Activated CD4-positive, alpha-beta T cell treated with anti-CD3 and anti-CD28 coated beads for 36 hours (primary cell): ENCODE measurements at regions of chr11 and their contacts with region 1.

Region 1: GRCh38 chr11:250740-251299 is 14.0 kb downstream of the PSMD13 start:
- DNase-seq: peak; percentile 90
- ATAC-seq: peak; percentile 97
- H3K4me3 Mint-ChIP-seq: no peak overlapping the region
- H3K27ac Mint-ChIP-seq: peak overlapping the region; percentile 56
- H3K4me1 Mint-ChIP-seq: peaks cover 13% of the 10 kb centered on the region
- H3K27me3 Mint-ChIP-seq: no peaks in the 10 kb centered on the region

Region 2: DNA sequence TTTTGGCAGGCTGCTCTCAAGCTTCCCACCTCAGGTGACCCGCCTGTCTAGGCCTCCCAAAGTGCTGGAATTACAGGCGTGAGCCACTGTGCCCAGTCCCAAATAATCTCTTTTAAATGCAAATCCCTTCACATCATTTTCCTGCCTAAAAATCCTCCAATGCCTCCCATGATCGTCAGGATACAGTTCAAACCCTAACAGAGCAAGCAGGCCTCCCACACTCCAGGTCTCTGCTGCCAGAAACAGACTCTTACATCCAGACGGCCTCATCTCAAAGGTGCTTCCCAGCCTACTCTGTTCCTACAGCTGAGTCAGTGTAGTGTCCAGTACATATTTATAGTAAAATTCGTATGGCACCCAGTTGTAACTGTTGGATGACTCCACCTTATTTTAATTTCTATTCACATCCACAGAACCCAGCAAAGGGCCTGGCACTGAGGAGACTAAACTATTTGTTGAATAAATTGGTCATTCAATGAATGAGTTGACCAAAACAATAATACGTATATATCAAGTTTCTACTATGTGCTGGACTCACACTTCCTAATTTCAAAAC is 22.9 kb before region 1 on chr11:
- CTCF ChIA-PET with region 1: interaction called, 12 read pairs
- POLR2A ChIA-PET with region 1: no interaction called
- intact Hi-C with region 1: no loop called
- DNase-seq: no peak
- ATAC-seq: no peak
- H3K4me3 Mint-ChIP-seq: no peak overlapping the region
- H3K27ac Mint-ChIP-seq: no peak overlapping the region
- H3K4me1 Mint-ChIP-seq: peaks cover 10% of the 10 kb centered on the region
- H3K27me3 Mint-ChIP-seq: no peaks in the 10 kb centered on the region

Region 3: DNA sequence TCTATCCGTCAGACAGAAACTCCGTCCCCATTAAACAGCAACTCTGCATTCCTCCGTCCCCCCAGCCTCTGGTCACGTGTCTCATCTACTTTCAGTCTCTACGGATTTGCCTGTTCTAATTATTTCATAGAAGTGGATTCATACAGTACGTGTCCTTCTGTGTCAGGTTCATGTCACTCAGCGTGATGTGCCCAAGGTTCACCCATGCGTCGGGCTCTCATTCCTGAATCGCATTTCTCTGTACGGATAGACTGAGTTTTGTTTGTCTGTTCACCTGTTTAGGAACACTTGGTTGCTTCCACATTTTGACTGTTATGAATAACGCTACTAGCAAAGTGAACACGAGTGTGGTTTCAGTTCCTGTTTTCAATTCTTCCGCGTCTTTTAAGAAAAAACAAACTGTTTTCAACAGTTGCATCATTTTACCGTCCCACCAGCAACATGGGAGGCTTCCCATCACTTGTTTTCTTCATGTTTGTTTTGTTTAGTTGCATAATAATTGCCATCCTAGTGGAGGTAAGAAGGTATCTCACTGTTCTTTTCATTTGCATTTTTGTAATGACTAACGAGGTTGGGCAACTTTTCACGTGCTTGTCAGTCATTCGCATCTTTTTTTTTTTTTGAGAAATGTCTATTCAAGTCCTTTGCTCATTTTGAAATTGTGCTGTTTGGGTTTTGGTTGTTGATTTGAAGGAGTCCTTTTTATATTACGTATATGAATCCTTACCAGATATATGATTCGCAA is 18.5 kb after region 1 on chr11:
- CTCF ChIA-PET with region 1: interaction called, 35 read pairs
- POLR2A ChIA-PET with region 1: interaction called, 5 read pairs
- intact Hi-C with region 1: loop called in 1 of 2 experiments (anchors 2 kb)
- DNase-seq: peak; percentile 72
- ATAC-seq: peak; percentile 71
- H3K4me3 Mint-ChIP-seq: peak overlapping the region; percentile 79
- H3K27ac Mint-ChIP-seq: peak overlapping the region; percentile 99
- H3K4me1 Mint-ChIP-seq: peaks cover 43% of the 10 kb centered on the region
- H3K27me3 Mint-ChIP-seq: no peaks in the 10 kb centered on the region

Region 4: GRCh38 chr11:288328-289144 is 37.7 kb after region 1 on chr11 and contains the start of gene PGGHG:
- CTCF ChIA-PET with region 1: interaction called, 8 read pairs
- POLR2A ChIA-PET with region 1: no interaction called
- intact Hi-C with region 1: loop called in 1 of 2 experiments (anchors 1 kb)
- DNase-seq: peak; percentile 62
- ATAC-seq: peak; percentile 17
- H3K4me3 Mint-ChIP-seq: peak within 1 kb of the TSS; percentile 83
- H3K27ac Mint-ChIP-seq: peak within 1 kb of the TSS; percentile 92
- H3K4me1 Mint-ChIP-seq: peaks cover 29% of the 10 kb centered on the region
- H3K27me3 Mint-ChIP-seq: no peaks in the 10 kb centered on the region
- total RNA-seq, gene PGGHG: 73.4 to 82.3 TPM

Region 5: GRCh38 chr11:313787-314547 is 63.1 kb after region 1 on chr11 and contains the start of gene IFITM1:
- CTCF ChIA-PET with region 1: interaction called, 26 read pairs
- POLR2A ChIA-PET with region 1: no interaction called
- intact Hi-C with region 1: loop called in 1 of 2 experiments (anchors 2 kb)
- DNase-seq: peak; percentile 78
- ATAC-seq: peak; percentile 40
- H3K4me3 Mint-ChIP-seq: peak within 1 kb of the TSS; percentile 95
- H3K27ac Mint-ChIP-seq: peak within 1 kb of the TSS; percentile 99
- H3K4me1 Mint-ChIP-seq: peaks cover 29% of the 10 kb centered on the region
- H3K27me3 Mint-ChIP-seq: no peaks in the 10 kb centered on the region
- total RNA-seq, gene IFITM1: 248 to 285 TPM

Region 6: GRCh38 chr11:363948-364761 is 113.3 kb after region 1 on chr11:
- CTCF ChIA-PET with region 1: interaction called, 22 read pairs
- POLR2A ChIA-PET with region 1: no interaction called
- intact Hi-C with region 1: loop called (anchors 1 to 5 kb)
- DNase-seq: peak; percentile 78
- ATAC-seq: peak; percentile 77
- H3K4me3 Mint-ChIP-seq: no peak overlapping the region
- H3K27ac Mint-ChIP-seq: no peak overlapping the region
- H3K4me1 Mint-ChIP-seq: peaks cover 15% of the 10 kb centered on the region
- H3K27me3 Mint-ChIP-seq: peaks cover 19% of the 10 kb centered on the region

Region 7: DNA sequence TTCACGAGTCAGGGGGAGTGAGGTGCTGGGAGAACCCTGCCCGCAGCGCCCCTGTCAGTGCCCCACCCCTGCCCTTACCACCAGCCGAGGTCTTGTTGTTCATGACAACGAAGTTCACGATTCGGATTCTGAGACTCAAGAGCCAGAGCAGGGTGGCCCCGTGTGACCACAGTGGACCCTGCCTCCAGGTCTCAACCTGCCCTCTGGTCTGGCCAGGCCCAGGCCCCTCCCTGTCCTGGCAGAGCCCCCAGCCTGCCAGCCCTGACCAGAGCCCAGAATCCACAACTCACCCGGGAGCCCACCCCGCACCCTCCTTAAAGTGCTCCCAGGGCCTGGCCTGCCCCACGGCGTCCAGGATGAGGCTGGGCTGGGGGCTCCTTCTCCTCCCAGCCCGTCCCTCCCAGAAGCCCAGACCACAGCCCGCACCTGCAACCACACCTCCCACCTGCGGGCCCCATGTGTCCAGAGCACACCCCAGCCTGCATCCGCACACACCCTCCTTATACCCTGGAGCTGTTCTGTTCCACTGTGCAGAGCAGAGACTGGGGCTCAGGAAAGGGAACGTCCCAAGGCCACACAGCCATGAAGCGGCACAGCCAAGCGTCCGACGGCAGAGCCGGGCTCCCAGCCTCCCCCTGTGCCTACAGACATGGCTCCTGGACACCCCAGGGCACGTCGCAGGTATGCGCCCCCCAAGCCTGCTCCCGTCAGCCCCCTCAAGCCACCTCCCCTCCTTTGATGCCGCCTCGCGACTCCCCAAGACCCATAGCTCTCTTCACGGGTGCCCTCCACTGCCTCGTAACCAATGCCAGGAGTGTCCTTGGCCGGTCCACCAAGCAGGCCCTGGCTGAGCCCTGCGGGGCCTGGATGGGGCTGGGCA is 181.3 kb after region 1 on chr11:
- CTCF ChIA-PET with region 1: no interaction called
- POLR2A ChIA-PET with region 1: no interaction called
- intact Hi-C with region 1: no loop called
- DNase-seq: no peak
- ATAC-seq: no peak
- H3K4me3 Mint-ChIP-seq: no peak overlapping the region
- H3K27ac Mint-ChIP-seq: no peak overlapping the region
- H3K4me1 Mint-ChIP-seq: no peaks in the 10 kb centered on the region
- H3K27me3 Mint-ChIP-seq: no peaks in the 10 kb centered on the region

Region 8: GRCh38 chr11:579830-580601 is 329.2 kb after region 1 on chr11:
- CTCF ChIA-PET with region 1: no interaction called
- POLR2A ChIA-PET with region 1: no interaction called
- intact Hi-C with region 1: no loop called
- DNase-seq: no peak
- ATAC-seq: no peak
- H3K4me3 Mint-ChIP-seq: no peak overlapping the region
- H3K27ac Mint-ChIP-seq: no peak overlapping the region
- H3K4me1 Mint-ChIP-seq: peaks cover 39% of the 10 kb centered on the region
- H3K27me3 Mint-ChIP-seq: peaks cover 2% of the 10 kb centered on the region